ENCODE measurements at regions of chr20 and their contacts with region 1.

Region 1: GRCh38 chr20:56554869-56555268 is 21.8 kb downstream of the FAM209B start:
- DNase-seq: no peak
- ATAC-seq: peak; percentile 91

Region 2: DNA sequence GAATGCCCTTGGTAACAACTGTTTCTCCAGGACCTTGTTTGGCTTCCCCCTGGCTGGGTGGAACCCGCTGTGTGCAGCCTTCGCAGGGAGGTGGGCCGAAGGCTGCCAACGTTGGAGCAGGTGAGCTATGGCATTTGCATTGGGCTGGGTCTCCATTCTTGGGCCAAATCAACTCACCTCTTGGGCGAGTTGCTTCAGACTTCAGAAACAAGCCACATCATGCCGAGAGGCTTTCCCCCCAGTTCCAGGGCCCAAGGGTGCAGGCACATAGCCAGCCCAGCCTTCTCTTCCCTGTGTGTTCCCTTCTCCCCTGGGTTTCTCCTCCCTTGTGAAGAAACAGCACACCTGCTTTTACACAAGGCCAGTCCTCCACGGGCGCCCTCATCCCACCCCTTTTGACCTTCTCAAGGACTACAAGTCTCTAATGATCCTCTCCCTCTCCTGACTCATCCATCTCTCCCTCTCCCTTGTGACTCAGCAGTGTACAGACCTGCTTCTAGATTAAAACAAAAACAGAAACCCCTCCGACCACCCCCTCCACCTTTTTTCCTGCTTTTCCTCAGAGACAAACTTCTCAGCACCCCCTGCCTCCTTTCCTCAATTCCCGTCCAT is 19.8 kb after region 1 on chr20:
- intact Hi-C with region 1: loop called (anchors 1 kb)
- DNase-seq: no peak
- ATAC-seq: no peak

Region 3: GRCh38 chr20:56974499-56975236 is 419.8 kb after region 1 on chr20:
- intact Hi-C with region 1: loop called (anchors 5 kb)
- DNase-seq: no peak
- ATAC-seq: no peak

Region 4: DNA sequence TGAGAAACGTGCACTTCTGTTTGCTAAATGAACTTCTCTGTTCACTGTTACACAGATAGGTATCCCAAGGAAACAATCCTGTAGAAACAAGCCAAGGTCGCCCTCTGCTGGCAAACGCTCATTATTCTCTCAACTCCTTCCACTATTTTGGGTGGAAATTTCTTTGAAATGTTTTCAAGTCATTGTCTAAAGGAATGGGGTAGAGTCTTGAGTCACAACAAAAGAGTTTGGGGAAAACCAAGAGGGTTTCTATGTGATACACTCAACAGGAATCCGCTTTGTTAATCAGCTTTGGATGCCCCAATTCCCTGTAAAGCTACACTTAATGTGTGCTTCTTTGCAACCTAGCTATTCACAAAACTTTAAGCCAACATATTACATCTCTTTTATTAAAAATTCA is 791.6 kb after region 1 on chr20:
- intact Hi-C with region 1: loop called (anchors 2 kb)
- DNase-seq: peak; percentile 83
- ATAC-seq: no peak

Measured in Right ventricle myocardium inferior (tissue), 1 donor.